Activated CD4-positive, alpha-beta memory T cell treated with anti-CD3 and anti-CD28 coated beads for 36 hours (primary cell): ENCODE measurements at regions of chr6 and their contacts with region 1.

Region 1: DNA sequence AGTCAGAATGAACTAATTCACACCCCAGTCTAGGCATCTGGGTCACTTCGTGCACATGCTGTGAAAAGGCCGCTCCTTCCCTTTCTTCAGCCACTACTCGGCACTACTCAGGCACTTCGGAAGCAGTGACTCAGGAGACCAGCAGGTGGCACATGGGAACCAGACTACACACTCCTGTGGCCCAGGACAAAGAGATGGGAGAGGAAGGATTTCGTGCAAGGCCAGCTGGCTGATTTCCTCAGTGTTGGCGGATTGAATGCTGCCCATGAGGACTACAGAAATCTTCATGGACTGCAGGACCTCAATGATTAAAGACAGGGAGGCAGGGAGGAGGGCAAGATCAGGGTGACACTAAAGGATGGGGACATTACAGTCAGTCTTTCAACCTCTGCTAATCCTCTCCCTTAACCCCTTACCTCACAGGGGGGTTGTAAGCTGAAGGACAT is 117.8 kb upstream of the SPACA1 start:
- DNase-seq: peak; percentile 74
- H3K4me3 Mint-ChIP-seq: no peak overlapping the region
- H3K27ac Mint-ChIP-seq: no peak overlapping the region
- H3K4me1 Mint-ChIP-seq: no peaks in the 10 kb centered on the region
- H3K27me3 Mint-ChIP-seq: peaks cover 2% of the 10 kb centered on the region

Region 2: GRCh38 chr6:87856478-87856877 is 73.4 kb before region 1 on chr6:
- CTCF ChIA-PET with region 1: no interaction called
- POLR2A ChIA-PET with region 1: no interaction called
- intact Hi-C with region 1: no loop called
- DNase-seq: no peak
- H3K4me3 Mint-ChIP-seq: no peak overlapping the region
- H3K27ac Mint-ChIP-seq: no peak overlapping the region
- H3K4me1 Mint-ChIP-seq: peaks cover 2% of the 10 kb centered on the region
- H3K27me3 Mint-ChIP-seq: peaks cover 2% of the 10 kb centered on the region

Region 3: DNA sequence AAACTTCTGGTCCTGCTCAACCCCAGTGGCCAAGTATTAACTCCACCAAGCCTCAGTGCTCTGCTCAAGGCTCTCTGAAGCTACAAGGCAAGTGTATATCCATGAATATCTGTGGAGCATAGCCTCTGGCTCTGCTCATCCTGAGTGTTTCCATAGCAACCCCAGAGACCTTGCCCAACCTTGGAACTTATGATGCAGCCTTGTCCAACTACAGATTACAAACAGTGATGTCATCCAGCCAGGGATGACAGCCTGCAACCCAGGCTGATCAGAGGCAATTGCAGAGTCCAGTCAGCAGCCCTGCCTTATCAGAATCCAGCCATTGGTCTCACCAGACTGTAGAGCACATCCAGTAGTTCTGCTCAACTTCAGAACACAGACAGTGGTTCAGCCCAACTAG is 52.3 kb after region 1 on chr6:
- CTCF ChIA-PET with region 1: no interaction called
- POLR2A ChIA-PET with region 1: no interaction called
- intact Hi-C with region 1: no loop called
- DNase-seq: no peak
- H3K4me3 Mint-ChIP-seq: no peak overlapping the region
- H3K27ac Mint-ChIP-seq: no peak overlapping the region
- H3K4me1 Mint-ChIP-seq: no peaks in the 10 kb centered on the region
- H3K27me3 Mint-ChIP-seq: peaks cover 15% of the 10 kb centered on the region

Region 4: GRCh38 chr6:88165844-88166492 is 236.1 kb after region 1 on chr6 and contains the start of gene CNR1:
- CTCF ChIA-PET with region 1: no interaction called
- POLR2A ChIA-PET with region 1: no interaction called
- intact Hi-C with region 1: loop called (anchors 5 kb)
- DNase-seq: peak; percentile 27
- H3K4me3 Mint-ChIP-seq: peak within 1 kb of the TSS; percentile 50
- H3K27ac Mint-ChIP-seq: no peak within 1 kb of the TSS
- H3K4me1 Mint-ChIP-seq: peaks cover 9% of the 10 kb centered on the region
- H3K27me3 Mint-ChIP-seq: peaks cover 56% of the 10 kb centered on the region
- total RNA-seq, gene CNR1: not detected

Region 5: GRCh38 chr6:88238065-88238464 is 308.2 kb after region 1 on chr6:
- CTCF ChIA-PET with region 1: interaction called, 3 read pairs
- POLR2A ChIA-PET with region 1: no interaction called
- intact Hi-C with region 1: loop called (anchors 1 kb)
- DNase-seq: peak; percentile 9
- H3K4me3 Mint-ChIP-seq: no peak overlapping the region
- H3K27ac Mint-ChIP-seq: no peak overlapping the region
- H3K4me1 Mint-ChIP-seq: no peaks in the 10 kb centered on the region
- H3K27me3 Mint-ChIP-seq: peaks cover 2% of the 10 kb centered on the region

Region 6: DNA sequence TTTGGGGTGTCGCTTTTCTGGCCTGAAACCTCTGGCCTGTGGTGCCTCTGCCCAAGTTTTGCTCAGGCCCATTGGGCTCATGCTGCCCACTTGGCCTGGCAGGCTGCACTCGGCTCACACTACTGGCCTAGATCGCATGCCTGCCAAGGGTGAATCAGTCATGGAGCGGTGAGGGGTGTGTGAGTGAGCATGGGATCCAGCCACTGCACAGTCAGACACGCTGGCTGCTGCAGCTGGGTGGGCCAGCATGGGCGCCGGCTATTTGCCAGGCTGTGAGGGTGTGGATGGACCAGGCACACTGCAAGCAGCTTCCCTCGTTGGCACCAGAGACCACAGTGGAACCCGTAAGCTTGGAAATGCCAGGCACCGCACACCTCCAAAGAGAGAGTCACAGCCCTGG is 381.7 kb after region 1 on chr6:
- CTCF ChIA-PET with region 1: no interaction called
- POLR2A ChIA-PET with region 1: no interaction called
- intact Hi-C with region 1: no loop called
- DNase-seq: no peak
- H3K4me3 Mint-ChIP-seq: no peak overlapping the region
- H3K27ac Mint-ChIP-seq: no peak overlapping the region
- H3K4me1 Mint-ChIP-seq: no peaks in the 10 kb centered on the region
- H3K27me3 Mint-ChIP-seq: no peaks in the 10 kb centered on the region

Region 7: GRCh38 chr6:88780714-88781389 is 851.0 kb after region 1 on chr6:
- CTCF ChIA-PET with region 1: interaction called, 4 read pairs
- POLR2A ChIA-PET with region 1: no interaction called
- intact Hi-C with region 1: loop called (anchors 1 kb)
- DNase-seq: peak; percentile 55
- H3K4me3 Mint-ChIP-seq: no peak overlapping the region
- H3K27ac Mint-ChIP-seq: no peak overlapping the region
- H3K4me1 Mint-ChIP-seq: peaks cover 13% of the 10 kb centered on the region
- H3K27me3 Mint-ChIP-seq: no peaks in the 10 kb centered on the region